Ovary (tissue), 10 donors: ENCODE measurements at regions of chr2 and their contacts with region 1.

Region 1: DNA sequence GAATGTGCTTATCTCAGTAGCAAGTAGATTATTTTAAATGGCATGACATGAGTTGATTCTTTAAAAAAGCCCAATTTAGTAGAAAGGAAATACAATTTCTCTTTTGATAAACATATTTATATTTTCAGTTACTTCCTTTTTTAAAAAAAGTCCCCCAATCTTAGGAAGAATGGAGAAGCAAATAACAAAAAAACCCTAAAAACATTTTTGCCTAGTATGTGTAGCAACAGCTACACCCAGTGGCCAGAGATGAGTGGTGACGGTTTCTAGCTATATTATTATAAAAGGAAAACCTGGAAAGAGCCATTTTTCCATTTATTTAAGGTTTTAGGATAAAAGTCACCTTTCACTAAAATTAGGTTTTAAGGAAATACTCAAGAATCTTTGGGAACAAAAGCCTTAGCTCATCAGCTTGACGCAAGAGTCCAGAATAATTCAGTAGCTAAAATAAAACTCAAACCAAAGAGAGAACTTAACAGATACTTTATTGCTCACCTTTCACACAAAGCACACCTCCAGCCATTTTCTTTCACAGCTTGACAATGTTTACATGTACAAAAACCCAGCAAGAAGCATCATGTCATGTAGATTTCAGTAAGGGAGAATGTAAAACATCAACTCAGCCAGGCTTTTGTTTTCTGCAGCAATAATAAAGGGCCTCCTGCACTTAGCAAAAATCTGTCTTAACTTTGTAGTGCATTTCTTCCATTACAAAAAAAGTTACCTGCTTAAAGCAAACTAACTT is 15.7 kb downstream of the FAM98A start:
- DNase-seq: peak in 1 of 5 donors; percentile 23
- H3K4me3 ChIP-seq: no peak overlapping the region
- H3K27ac ChIP-seq: no peak overlapping the region
- H3K4me1 ChIP-seq: peaks cover 2% of the 10 kb centered on the region
- H3K27me3 ChIP-seq: no peaks in the 10 kb centered on the region
- CTCF ChIP-seq: peak; percentile 68 to 74 (median 68)
- EP300 ChIP-seq: no peak
- POLR2A ChIP-seq: no peak

Region 2: GRCh38 chr2:33380001-33380609 is 203.3 kb before region 1 on chr2:
- intact Hi-C with region 1: loop called in 1 of 4 experiments (anchors 10 kb)
- DNase-seq: no peak
- H3K4me3 ChIP-seq: no peak overlapping the region
- H3K27ac ChIP-seq: no peak overlapping the region
- H3K4me1 ChIP-seq: no peaks in the 10 kb centered on the region
- H3K27me3 ChIP-seq: no peaks in the 10 kb centered on the region
- CTCF ChIP-seq: peak in 1 of 3 donors; percentile 19
- EP300 ChIP-seq: no peak
- POLR2A ChIP-seq: no peak

Region 3: DNA sequence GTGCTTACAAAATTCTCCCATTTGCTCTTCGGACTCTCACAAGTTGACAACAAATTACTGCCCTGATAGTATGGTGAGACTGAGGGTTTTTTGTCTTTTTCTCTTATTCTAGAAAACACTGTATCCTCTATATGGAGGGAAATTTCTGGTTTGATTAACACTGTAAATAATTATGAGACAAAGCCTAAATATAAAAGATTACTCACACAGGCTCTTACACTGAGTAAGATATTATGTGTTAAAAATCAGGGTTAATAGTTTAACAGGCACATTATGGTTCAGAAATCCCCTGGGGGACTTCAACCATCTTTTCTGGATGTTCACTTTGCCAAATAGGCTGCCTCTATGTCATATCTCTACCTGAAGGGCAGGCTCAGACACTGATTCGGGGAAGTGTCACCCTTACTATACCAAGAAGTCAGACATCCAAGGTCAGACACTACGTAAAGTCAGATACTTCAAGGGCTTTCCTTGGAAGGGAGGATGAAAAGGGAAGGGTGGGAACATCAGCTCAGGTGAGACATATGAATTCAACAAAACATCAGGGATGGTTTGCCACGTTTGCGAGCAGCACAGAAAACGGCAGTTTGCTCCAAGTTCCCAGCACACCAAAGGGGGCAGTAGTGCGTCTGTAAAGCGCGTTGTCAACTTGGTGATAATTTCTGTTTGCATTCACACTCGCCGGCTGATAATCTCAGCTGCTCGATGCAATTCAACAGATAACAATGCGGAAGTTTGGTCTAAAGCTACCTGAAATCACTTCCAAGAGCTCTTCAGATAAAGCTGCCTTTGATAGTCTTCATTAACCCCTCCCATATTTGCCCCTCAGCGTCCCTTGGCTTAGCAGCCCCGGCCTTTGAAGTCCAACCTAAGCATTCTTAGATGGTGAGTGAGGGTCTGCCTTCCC is 107.9 kb before region 1 on chr2:
- intact Hi-C with region 1: loop called in 1 of 4 experiments (anchors 5 kb)
- DNase-seq: peak; percentile 56 to 73 (median 67)
- H3K4me3 ChIP-seq: peak overlapping the region; percentile 52
- H3K27ac ChIP-seq: peak overlapping the region; percentile 7 to 69
- H3K4me1 ChIP-seq: peaks cover 1% of the 10 kb centered on the region
- H3K27me3 ChIP-seq: no peaks in the 10 kb centered on the region
- CTCF ChIP-seq: peak in 2 of 3 donors; percentile 51 to 65
- EP300 ChIP-seq: no peak
- POLR2A ChIP-seq: no peak